PC-9 (cell line): ENCODE measurements at regions of chr3 and their contacts with region 1.

Region 1: DNA sequence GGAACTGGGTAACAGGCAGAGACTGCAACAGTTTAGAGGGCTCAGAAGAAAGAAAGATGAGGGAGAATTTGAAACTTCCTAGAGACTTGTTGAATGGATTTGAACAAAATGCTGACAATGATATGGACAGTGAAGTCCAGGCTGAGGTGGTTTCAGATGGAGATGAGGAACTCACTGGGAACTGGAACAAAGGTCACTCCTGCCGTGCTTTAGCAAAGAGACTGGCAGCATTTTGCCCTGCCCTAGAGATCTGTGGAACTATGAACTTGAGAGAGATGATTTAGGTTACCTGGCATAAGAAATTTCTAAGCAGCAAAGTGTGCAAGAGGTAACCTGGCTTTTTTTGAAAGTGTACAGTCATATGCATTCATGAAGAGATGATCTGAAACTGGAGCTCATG is 11.7 kb downstream of the EIF5A2 start:
- DNase-seq: no peak
- H3K4me3 ChIP-seq: no peak overlapping the region
- H3K27ac ChIP-seq: no peak overlapping the region
- H3K4me1 ChIP-seq: no peaks in the 10 kb centered on the region
- H3K27me3 ChIP-seq: no peaks in the 10 kb centered on the region
- CTCF ChIP-seq: no peak

Region 2: GRCh38 chr3:170387950-170388349 is 508.8 kb before region 1 on chr3:
- CTCF ChIA-PET with region 1: no interaction called
- POLR2A ChIA-PET with region 1: no interaction called
- intact Hi-C with region 1: no loop called
- DNase-seq: peak in 1 of 2 experiments; percentile 64
- H3K4me3 ChIP-seq: no peak overlapping the region
- H3K27ac ChIP-seq: no peak overlapping the region
- H3K4me1 ChIP-seq: no peaks in the 10 kb centered on the region
- H3K27me3 ChIP-seq: no peaks in the 10 kb centered on the region
- CTCF ChIP-seq: peak; percentile 41

Region 3: DNA sequence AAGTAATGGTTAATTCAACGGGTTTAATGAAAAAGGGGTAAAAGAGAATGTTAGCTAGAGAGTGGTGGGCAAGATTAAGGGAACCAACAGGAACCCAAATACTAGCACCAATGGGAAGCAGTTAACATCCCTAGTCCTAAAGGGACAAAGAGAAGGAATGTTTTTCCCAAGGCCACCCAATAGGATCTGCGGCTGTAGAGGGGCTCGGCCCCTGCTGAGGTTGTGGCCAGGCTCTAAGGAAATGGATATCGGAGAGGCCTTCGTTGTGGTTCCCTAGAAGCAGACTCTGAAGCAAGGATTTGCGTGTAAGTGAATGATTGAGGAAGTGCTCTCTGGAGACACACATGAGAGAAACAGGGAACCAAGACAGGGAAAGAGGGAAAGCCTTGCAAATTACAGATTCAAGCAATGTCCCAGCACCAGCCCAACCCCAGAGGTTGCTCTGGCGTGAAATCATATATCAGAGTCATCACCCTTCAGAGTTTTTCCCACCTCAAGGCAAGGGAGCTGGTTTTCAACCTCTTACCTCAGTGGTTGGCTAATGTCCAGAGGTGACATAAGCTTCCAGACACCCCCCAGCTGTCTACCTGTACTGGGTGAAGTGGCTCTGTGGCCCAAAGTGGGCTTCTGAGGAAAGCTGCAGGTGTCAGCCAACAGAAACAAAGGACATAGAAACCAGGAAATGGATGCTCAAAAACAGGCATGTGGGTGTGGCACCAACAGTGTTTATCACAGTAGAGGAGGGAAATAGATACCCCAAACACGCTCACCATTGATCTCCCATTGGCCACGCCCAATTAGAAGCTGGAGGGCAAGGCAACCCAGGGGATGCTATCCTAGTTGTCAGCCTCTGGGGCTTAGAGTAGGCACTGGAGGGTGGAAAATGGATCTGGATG is 647.2 kb after region 1 on chr3:
- CTCF ChIA-PET with region 1: interaction called, 12 read pairs
- POLR2A ChIA-PET with region 1: no interaction called
- intact Hi-C with region 1: no loop called
- DNase-seq: peak in 1 of 2 experiments; percentile 36
- H3K4me3 ChIP-seq: no peak overlapping the region
- H3K27ac ChIP-seq: no peak overlapping the region
- H3K4me1 ChIP-seq: peaks cover 8% of the 10 kb centered on the region; the same call in 1 of the 2 replicates
- H3K27me3 ChIP-seq: no peaks in the 10 kb centered on the region
- CTCF ChIP-seq: no peak